IMR-90 (cell line): ENCODE measurements at regions of chr4 and their contacts with region 1.

Region 1: DNA sequence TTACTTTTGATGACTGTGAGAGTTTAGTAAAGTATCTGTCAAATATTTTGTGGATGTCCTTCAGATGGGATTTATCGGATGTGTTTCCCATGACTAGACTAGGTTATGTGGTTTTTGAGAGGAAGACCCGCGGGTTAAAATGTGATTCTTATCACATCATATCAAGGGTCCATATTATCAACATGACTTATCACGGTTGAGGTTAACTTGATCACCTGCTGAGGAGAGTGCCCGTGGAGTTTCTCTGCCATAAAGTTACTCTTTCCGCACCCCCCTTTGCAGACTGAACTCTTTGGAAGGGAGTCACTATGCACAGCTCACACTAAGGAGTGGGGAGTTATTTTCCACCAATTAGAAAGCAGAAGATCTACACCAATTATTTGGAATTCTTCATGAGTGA is 38.7 kb downstream of the GLRB start:
- DNase-seq: no peak
- ATAC-seq: no peak
- H3K4me3 ChIP-seq: no peak overlapping the region
- H3K27ac ChIP-seq: no peak overlapping the region
- H3K4me1 ChIP-seq: peaks cover 4% of the 10 kb centered on the region
- H3K27me3 ChIP-seq: no peaks in the 10 kb centered on the region
- CTCF ChIP-seq: no peak
- POLR2A ChIP-seq: no peak
- RAD21 ChIP-seq: no peak

Region 2: GRCh38 chr4:156779774-156780173 is 334.9 kb before region 1 on chr4:
- CTCF ChIA-PET with region 1: no interaction called
- POLR2A ChIA-PET with region 1: no interaction called
- dilution Hi-C with region 1: no loop called
- in situ Hi-C with region 1: no loop called
- intact Hi-C with region 1: no loop called
- DNase-seq: peak; percentile 95
- ATAC-seq: peak; percentile 72
- H3K4me3 ChIP-seq: no peak overlapping the region
- H3K27ac ChIP-seq: peak overlapping the region; percentile 30; the same call in 1 of the 2 replicates
- H3K4me1 ChIP-seq: peaks cover 14% of the 10 kb centered on the region
- H3K27me3 ChIP-seq: no peaks in the 10 kb centered on the region
- CTCF ChIP-seq: no peak
- POLR2A ChIP-seq: no peak
- RAD21 ChIP-seq: no peak

Region 3: DNA sequence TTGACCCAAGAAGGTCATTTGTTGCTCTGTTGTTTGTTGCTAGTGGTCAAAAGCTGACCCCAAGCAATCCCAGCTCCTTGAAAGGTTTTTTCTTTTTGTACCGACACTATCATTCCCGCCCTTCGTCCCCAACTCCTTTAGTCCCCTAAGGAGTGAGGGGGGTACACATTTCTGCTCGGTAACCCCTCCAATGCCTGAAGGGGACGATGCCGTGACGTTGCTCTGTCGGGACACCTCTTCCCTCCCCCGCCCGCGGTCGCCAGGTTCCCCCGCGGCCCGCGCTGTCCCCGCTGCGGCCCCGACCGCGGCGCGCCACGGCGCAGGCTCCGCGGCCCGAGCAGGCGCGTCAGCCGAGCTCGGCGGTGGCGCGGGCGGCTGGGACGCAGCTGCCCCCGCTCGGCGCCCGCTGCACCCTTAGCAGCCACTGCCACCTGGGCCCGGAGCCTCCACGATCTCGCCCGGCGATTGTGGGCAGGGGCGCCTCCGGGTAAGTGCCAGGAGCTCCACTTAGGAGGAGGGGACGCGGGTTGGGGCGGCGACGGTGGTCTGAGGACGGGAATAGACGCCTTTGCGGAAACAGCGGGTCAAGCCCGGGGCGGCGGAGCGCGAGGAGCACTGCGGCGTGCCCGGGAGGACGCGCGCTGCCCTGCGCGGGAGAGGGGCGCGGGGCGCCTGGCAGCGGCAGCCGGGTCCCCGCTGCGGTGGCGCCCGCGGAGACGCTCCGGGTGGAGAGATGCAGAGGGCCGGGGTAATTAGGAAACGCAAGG is 38.7 kb before region 1 on chr4 and contains the start of gene GLRB:
- CTCF ChIA-PET with region 1: no interaction called
- POLR2A ChIA-PET with region 1: no interaction called
- dilution Hi-C with region 1: no loop called
- in situ Hi-C with region 1: no loop called
- intact Hi-C with region 1: loop called (anchors 5 kb)
- DNase-seq: peak; percentile 11
- ATAC-seq: peak; percentile 93
- H3K4me3 ChIP-seq: peak within 1 kb of the TSS; percentile 96
- H3K27ac ChIP-seq: peak within 1 kb of the TSS; percentile 60; the same call in 1 of the 2 replicates
- H3K4me1 ChIP-seq: peaks cover 4% of the 10 kb centered on the region; the same call in 1 of the 2 replicates
- H3K27me3 ChIP-seq: no peaks in the 10 kb centered on the region
- CTCF ChIP-seq: no peak
- POLR2A ChIP-seq: no peak
- RAD21 ChIP-seq: no peak
- total RNA-seq, gene GLRB: 3.0 and 3.9 TPM in 2 replicates

Region 4: DNA sequence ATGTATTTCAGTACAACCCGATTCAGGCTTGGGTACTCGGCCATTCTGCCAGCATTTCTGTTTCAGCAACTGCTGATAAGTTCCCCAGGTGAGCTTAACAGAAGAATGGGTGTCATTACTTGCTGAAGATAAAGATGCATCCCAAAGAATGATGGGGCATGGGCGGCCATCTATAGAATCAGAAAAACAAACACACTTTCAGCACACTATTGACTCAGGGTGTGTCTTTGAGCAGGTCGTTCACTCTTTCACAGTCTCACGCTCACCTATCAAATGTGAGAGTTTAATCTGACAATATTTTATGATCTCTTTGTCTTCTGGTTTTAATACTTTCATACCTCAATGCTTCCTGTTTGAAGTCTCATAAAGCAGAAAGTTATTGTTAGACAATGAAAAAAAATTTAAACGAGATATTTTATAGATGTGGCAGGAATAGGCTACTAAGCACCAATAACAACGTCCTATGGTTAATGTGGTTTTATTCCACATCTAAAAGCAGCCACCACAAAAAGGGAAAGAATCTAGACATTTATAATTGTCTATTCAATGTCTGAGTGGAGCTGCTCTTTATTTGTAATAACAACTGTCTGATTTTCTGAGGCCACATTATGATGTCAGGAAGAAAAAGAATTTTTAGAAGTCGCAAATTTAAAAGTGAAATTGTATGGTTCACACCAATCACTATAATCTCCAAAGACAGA is 1041.1 kb after region 1 on chr4:
- CTCF ChIA-PET with region 1: no interaction called
- POLR2A ChIA-PET with region 1: no interaction called
- dilution Hi-C with region 1: no loop called
- in situ Hi-C with region 1: no loop called
- intact Hi-C with region 1: no loop called
- DNase-seq: no peak
- ATAC-seq: no peak
- H3K4me3 ChIP-seq: no peak overlapping the region
- H3K27ac ChIP-seq: no peak overlapping the region
- H3K4me1 ChIP-seq: peaks cover 3% of the 10 kb centered on the region; the same call in 1 of the 2 replicates
- H3K27me3 ChIP-seq: no peaks in the 10 kb centered on the region
- CTCF ChIP-seq: no peak
- POLR2A ChIP-seq: no peak
- RAD21 ChIP-seq: no peak